Calu3 (cell line): ENCODE measurements at regions of chr9 and their contacts with region 1.

Region 1: DNA sequence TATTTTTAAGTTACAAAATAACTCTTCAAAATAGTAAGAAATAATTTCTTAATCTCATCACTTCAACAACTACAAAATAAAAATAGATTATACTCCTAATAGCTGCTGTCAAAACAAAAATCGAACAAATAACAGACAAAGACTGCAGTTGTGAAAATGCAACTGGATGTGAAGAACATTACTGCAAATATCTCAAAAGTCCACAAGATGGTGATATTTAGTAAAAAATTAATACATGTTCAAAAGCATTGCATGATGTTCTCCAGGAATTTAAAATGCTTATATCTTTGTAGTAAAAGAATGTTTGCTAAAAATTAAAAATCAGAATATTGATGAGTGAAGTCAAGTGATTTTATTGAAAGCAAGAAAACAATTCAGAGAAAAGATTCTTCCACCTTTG is 66.2 kb downstream of the MPDZ start:
- DNase-seq: no peak
- H3K4me3 Mint-ChIP-seq: no peak overlapping the region
- H3K27ac Mint-ChIP-seq: no peak overlapping the region
- H3K4me1 Mint-ChIP-seq: no peaks in the 10 kb centered on the region
- H3K27me3 Mint-ChIP-seq: no peaks in the 10 kb centered on the region
- CTCF ChIP-seq: no peak

Region 2: GRCh38 chr9:13063985-13064689 is 149.2 kb before region 1 on chr9:
- CTCF ChIA-PET with region 1: no interaction called
- intact Hi-C with region 1: no loop called
- DNase-seq: no peak
- H3K4me3 Mint-ChIP-seq: no peak overlapping the region
- H3K27ac Mint-ChIP-seq: no peak overlapping the region
- H3K4me1 Mint-ChIP-seq: no peaks in the 10 kb centered on the region
- H3K27me3 Mint-ChIP-seq: peaks cover 11% of the 10 kb centered on the region
- CTCF ChIP-seq: no peak

Region 3: GRCh38 chr9:13588151-13589033 is 375.1 kb after region 1 on chr9:
- CTCF ChIA-PET with region 1: no interaction called
- intact Hi-C with region 1: no loop called
- DNase-seq: no peak
- H3K4me3 Mint-ChIP-seq: no peak overlapping the region
- H3K27ac Mint-ChIP-seq: no peak overlapping the region
- H3K4me1 Mint-ChIP-seq: no peaks in the 10 kb centered on the region
- H3K27me3 Mint-ChIP-seq: peaks cover 14% of the 10 kb centered on the region
- CTCF ChIP-seq: no peak

Region 4: DNA sequence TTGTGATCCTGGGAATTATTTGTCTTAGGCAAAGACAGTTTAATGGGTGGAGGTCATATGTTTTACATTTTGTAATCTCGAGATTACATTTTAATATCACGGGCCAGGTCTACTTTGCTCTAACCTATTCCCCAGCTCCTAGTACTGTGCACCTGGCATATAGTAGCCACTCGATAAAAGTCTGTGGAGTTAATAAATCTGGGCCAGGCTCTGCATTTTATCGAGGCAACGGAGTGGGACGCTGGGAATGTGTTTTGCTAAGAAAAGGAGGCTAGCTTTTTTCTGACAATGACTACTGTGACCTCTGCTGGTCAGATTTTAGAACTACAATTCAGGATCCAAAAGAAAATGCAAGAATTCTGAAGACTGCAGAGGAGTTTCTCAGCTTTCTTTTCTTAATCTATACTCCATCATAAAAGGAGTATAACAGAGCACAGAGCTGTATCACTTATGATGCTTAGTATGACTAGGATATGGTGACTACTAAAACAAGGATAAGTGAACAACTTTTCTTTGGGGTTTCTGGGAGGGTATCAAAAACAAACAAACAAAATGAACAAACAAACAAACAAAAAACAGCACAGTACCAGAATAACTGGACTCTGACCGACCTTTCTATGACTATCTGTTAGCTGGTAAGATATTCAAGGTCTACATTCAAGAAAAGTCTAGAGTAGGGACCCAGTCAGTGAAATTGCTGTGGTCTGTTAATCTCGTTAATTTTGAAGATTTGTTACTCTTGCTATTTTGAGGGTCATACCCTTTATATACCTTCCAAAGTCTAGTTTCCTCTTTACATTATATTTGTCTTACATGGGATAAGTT is 1555.3 kb after region 1 on chr9:
- CTCF ChIA-PET with region 1: no interaction called
- intact Hi-C with region 1: loop called (anchors 5 kb)
- DNase-seq: peak; percentile 34
- H3K4me3 Mint-ChIP-seq: no peak overlapping the region
- H3K27ac Mint-ChIP-seq: no peak overlapping the region
- H3K4me1 Mint-ChIP-seq: no peaks in the 10 kb centered on the region
- H3K27me3 Mint-ChIP-seq: peaks cover 10% of the 10 kb centered on the region
- CTCF ChIP-seq: peak; percentile 56